ENCODE measurements at regions of chr15 and their contacts with region 1.

Region 1: GRCh38 chr15:94582369-94582768 is 351.0 kb downstream of the MCTP2 start:
- DNase-seq: peak; percentile 48
- H3K4me3 Mint-ChIP-seq: no peak overlapping the region
- H3K27ac Mint-ChIP-seq: no peak overlapping the region
- H3K4me1 Mint-ChIP-seq: peaks cover 64% of the 10 kb centered on the region
- H3K27me3 Mint-ChIP-seq: peaks cover 61% of the 10 kb centered on the region

Region 2: GRCh38 chr15:94163999-94164807 is 418.2 kb before region 1 on chr15:
- intact Hi-C with region 1: loop called (anchors 2 kb)
- DNase-seq: peak; percentile 44
- H3K4me3 Mint-ChIP-seq: no peak overlapping the region
- H3K27ac Mint-ChIP-seq: no peak overlapping the region
- H3K4me1 Mint-ChIP-seq: peaks cover 10% of the 10 kb centered on the region
- H3K27me3 Mint-ChIP-seq: peaks cover 2% of the 10 kb centered on the region

Region 3: GRCh38 chr15:94306700-94307650 is 275.4 kb before region 1 on chr15:
- intact Hi-C with region 1: loop called (anchors 2 kb)
- DNase-seq: peak; percentile 36
- H3K4me3 Mint-ChIP-seq: peak overlapping the region; percentile 38
- H3K27ac Mint-ChIP-seq: peak overlapping the region; percentile 98
- H3K4me1 Mint-ChIP-seq: peaks cover 79% of the 10 kb centered on the region
- H3K27me3 Mint-ChIP-seq: no peaks in the 10 kb centered on the region

Region 4: DNA sequence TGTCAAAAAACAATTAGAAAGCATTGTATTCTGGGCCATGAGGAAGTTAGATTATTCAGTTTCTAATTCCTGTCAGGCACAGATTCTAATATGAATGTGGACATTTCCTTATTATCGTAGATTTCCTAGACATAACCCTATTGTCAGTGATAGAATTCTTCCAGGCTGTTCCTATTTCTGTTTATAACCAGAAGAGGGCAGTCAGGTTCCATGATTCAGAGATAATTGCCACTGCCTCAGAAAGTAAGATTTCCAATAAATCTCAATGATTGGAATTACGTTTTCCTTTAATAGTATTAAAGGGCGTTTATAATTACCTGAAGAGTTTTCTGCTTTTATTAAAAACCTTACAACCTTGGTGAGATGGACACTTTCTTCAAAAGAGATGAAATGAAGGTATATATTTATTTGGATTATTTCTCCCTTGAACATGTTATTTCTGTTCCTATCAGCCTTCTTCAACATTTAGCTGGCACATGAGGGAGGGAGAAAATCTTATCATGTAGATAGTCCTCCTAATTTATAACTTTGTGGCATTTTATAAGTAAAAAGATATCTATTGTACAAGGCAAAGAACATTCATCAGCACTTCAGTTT is 88.2 kb after region 1 on chr15:
- intact Hi-C with region 1: loop called (anchors 1 kb)
- DNase-seq: no peak
- H3K4me3 Mint-ChIP-seq: no peak overlapping the region
- H3K27ac Mint-ChIP-seq: no peak overlapping the region
- H3K4me1 Mint-ChIP-seq: peaks cover 21% of the 10 kb centered on the region
- H3K27me3 Mint-ChIP-seq: peaks cover 52% of the 10 kb centered on the region

Region 5: GRCh38 chr15:95284933-95285421 is 702.6 kb after region 1 on chr15:
- intact Hi-C with region 1: loop called (anchors 1 kb)
- DNase-seq: peak; percentile 53
- H3K4me3 Mint-ChIP-seq: peak overlapping the region; percentile 52
- H3K27ac Mint-ChIP-seq: peak overlapping the region; percentile 90
- H3K4me1 Mint-ChIP-seq: peaks cover 77% of the 10 kb centered on the region
- H3K27me3 Mint-ChIP-seq: peaks cover 15% of the 10 kb centered on the region

Region 6: DNA sequence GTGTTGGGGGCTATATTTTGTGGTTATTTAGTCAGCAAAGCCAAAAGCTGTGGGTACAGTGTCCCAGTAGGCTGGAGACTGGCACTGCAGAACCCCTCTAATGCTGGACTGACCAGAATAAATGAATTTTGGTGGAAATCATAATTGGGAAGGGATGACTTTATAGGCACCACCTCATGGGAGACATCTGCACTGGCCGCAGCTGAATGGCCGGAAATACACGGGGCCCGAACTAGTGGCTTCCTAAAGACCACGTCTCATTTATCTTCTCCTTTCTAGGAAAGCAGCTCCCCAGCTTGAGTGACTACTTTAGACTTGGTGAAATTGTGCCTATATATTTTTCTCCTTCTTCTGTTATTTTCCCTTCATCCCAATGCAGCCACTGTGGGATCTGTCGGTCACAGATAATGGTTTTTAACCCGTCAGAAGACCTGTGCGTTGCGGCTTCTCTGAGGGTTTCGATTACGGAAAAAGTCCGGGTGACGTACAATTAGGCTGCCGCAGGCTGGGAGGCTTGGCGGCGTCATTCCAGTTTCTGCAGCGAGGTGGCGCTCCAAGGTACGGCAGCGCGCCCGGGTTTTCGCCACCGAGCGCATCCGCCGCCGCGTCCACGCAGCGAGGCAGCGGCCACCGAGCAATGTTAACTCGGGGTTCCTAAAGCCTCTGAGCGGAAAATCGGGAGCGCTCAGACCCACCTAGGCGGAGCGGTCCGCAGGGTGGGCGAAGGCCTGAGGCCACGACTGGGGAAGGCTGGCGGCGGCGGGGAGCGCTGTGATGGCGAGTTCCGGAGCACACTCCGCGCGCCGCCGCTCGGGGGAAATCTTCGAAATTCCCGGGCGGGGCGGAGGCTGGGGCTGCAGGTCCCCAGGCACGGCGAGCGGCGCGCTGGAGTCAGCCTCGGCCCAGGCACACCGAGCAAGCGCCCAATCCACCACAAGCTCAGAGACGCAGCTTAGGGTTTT is 1774.4 kb after region 1 on chr15:
- intact Hi-C with region 1: loop called (anchors 5 kb)
- DNase-seq: peak; percentile 68
- H3K4me3 Mint-ChIP-seq: peak overlapping the region; percentile 83
- H3K27ac Mint-ChIP-seq: peak overlapping the region; percentile 63
- H3K4me1 Mint-ChIP-seq: peaks cover 16% of the 10 kb centered on the region
- H3K27me3 Mint-ChIP-seq: peaks cover 56% of the 10 kb centered on the region